Endothelial cell of umbilical vein (primary cell): ENCODE measurements at regions of chr6 and their contacts with region 1.

Region 1: GRCh38 chr6:38493931-38494547 is 145.7 kb downstream of the BTBD9 start:
- DNase-seq: peak; percentile 87
- H3K4me3 ChIP-seq: no peak overlapping the region
- H3K27ac ChIP-seq: no peak overlapping the region
- H3K4me1 ChIP-seq: no peaks in the 10 kb centered on the region
- H3K27me3 ChIP-seq: no peaks in the 10 kb centered on the region
- CTCF ChIP-seq: peak; percentile 56 to 59
- POLR2A ChIP-seq: no peak

Region 2: DNA sequence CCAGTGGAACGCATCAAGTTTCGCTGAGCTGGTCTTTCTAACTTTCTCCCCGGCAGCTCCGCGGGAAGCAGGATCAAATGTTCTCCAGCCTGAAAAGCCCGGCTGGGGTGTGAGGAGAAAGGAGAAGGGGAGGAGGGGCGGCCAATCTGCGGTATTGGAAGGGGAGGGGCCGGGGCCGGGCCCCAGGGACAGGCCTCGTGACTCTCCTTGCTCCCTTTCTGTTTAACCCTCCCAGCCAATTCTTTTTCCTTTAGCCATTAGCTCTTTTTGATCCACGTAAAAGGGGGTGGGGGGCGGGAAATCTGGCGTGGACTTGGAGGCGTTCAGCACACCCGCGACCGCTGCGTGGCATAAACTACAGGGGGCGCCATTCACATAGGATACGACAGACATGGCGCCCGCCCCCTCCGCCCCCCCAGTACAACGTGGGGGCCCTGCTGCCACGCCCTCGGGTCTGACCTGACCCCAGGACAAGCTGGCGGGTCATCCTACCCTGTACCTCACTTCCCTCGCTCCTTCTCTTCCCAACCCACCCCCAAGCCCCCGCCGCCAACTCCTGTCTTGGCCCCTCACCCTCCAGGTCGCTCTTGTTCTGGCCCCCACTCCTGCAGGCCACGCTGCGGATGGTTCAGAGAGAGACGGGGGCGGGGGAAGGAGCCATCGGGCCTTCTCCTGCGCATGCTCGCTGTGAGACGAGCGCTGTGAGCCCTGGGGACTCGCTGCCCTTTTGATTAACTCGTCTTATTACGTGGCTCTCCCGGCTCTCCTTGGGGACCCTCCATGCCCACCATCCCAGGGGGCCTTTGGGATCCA is 788.6 kb before region 1 on chr6:
- CTCF ChIA-PET with region 1: interaction called, 14 read pairs
- POLR2A ChIA-PET with region 1: no interaction called
- dilution Hi-C with region 1: no loop called
- intact Hi-C with region 1: loop called (anchors 2 kb)
- DNase-seq: peak; percentile 82
- H3K4me3 ChIP-seq: peak overlapping the region; percentile 37 to 46 (median 46)
- H3K27ac ChIP-seq: no peak overlapping the region
- H3K4me1 ChIP-seq: peaks cover 4% of the 10 kb centered on the region
- H3K27me3 ChIP-seq: peaks cover 0 to under 1% of the 10 kb centered on the region in 2 experiments
- CTCF ChIP-seq: peak; percentile 57 to 73
- POLR2A ChIP-seq: no peak

Region 3: GRCh38 chr6:38027685-38028373 is 466.2 kb before region 1 on chr6:
- CTCF ChIA-PET with region 1: interaction called, 91 read pairs
- POLR2A ChIA-PET with region 1: no interaction called
- dilution Hi-C with region 1: no loop called
- intact Hi-C with region 1: no loop called
- DNase-seq: peak; percentile 22
- H3K4me3 ChIP-seq: no peak overlapping the region
- H3K27ac ChIP-seq: no peak overlapping the region
- H3K4me1 ChIP-seq: peaks cover 6% of the 10 kb centered on the region
- H3K27me3 ChIP-seq: no peaks in the 10 kb centered on the region
- CTCF ChIP-seq: no peak
- POLR2A ChIP-seq: no peak

Region 4: DNA sequence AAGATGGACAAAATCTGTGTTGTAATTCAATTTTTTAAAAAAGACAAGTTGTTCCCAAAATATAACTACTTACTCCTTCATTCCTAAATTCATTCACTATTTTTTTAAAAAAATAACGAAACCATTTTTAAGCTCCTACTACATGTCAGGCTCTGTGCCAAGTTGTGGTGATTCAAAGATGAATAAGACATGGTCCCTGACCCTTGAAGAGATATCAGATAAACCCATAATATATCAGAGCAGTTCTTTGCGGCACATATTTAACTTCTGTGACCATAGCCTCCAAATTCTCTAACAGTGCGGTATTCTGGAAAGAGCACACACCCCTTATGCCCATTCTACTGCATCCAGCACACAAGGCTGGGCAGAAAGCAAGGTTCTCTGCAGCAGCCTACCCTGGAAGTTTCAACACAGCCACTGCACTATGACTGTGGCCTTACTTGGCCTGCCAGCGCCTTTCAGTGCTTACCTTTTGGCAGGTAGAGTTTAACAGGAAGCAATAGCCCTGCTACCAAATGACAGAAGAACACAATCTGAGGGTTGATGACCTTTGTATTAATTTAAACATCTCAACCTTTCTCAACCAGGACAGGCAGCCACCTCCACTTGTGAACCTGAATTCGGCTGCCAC is 260.8 kb before region 1 on chr6:
- CTCF ChIA-PET with region 1: interaction called, 10 read pairs
- POLR2A ChIA-PET with region 1: no interaction called
- dilution Hi-C with region 1: no loop called
- intact Hi-C with region 1: no loop called
- DNase-seq: peak; percentile 21
- H3K4me3 ChIP-seq: no peak overlapping the region
- H3K27ac ChIP-seq: no peak overlapping the region
- H3K4me1 ChIP-seq: peaks cover 13% of the 10 kb centered on the region
- H3K27me3 ChIP-seq: no peaks in the 10 kb centered on the region
- CTCF ChIP-seq: no peak
- POLR2A ChIP-seq: no peak

Region 5: GRCh38 chr6:38508894-38509293 is 14.9 kb after region 1 on chr6:
- CTCF ChIA-PET with region 1: interaction called, 22 read pairs
- POLR2A ChIA-PET with region 1: no interaction called
- dilution Hi-C with region 1: no loop called
- intact Hi-C with region 1: no loop called
- DNase-seq: no peak
- H3K4me3 ChIP-seq: no peak overlapping the region
- H3K27ac ChIP-seq: no peak overlapping the region
- H3K4me1 ChIP-seq: no peaks in the 10 kb centered on the region
- H3K27me3 ChIP-seq: peaks cover 0 to 3% of the 10 kb centered on the region in 2 experiments
- CTCF ChIP-seq: no peak
- POLR2A ChIP-seq: no peak

Region 6: DNA sequence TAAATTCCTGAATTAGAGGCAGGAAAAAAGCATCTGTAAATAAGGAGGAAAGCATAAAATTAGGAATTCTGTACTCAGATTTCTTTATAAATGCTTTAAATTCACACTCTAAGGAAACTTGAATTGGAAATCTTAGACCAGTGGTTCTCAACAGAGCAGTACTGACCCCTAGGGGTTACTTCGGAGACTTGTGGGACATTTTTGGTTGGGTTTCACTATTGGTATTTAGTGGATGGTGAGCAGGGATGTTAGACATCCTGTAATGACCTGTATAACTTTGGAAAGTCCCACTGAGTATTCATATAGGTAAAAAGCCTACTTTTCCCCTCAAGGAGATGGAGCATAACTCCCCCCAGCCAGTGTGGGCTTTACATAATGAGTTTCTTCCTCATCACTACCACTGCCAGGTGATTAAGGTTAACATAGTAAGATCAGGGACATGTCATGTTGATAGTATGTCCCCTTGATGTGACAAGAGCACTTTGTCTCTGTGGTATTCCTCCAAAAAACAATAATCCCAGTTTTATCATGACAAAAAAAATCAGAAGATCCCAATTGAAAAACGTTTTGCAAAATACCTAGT is 177.9 kb after region 1 on chr6:
- CTCF ChIA-PET with region 1: interaction called, 12 read pairs
- POLR2A ChIA-PET with region 1: no interaction called
- dilution Hi-C with region 1: no loop called
- intact Hi-C with region 1: loop called (anchors 1 kb)
- DNase-seq: peak; percentile 60
- H3K4me3 ChIP-seq: no peak overlapping the region
- H3K27ac ChIP-seq: no peak overlapping the region
- H3K4me1 ChIP-seq: peaks cover 15% of the 10 kb centered on the region
- H3K27me3 ChIP-seq: no peaks in the 10 kb centered on the region
- CTCF ChIP-seq: peak; percentile 55 to 60
- POLR2A ChIP-seq: no peak

Region 7: DNA sequence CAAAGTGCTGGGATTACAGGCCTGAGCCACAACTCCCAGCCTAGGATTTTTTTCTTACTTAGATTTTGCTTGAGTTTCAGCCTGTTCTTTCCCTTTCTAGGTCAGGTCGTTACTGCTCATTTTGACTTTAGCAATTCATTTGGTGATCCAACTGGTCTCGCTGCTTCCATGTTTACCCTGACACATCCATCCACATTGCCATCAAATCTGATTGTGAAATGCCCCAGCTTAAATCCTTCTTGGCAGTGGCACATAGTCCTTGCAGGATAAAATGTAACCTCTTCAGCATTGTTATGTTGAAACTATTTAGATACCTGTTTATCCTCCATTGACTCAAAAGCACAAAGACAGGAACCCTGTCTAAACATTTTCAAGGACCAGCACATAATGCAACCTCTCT is 298.3 kb after region 1 on chr6:
- CTCF ChIA-PET with region 1: no interaction called
- POLR2A ChIA-PET with region 1: no interaction called
- dilution Hi-C with region 1: no loop called
- intact Hi-C with region 1: no loop called
- DNase-seq: no peak
- H3K4me3 ChIP-seq: no peak overlapping the region
- H3K27ac ChIP-seq: no peak overlapping the region
- H3K4me1 ChIP-seq: peaks cover 51% of the 10 kb centered on the region
- H3K27me3 ChIP-seq: no peaks in the 10 kb centered on the region
- CTCF ChIP-seq: no peak
- POLR2A ChIP-seq: no peak